Colonic mucosa (tissue), 4 donors: ENCODE measurements at regions of chr7 and their contacts with region 1.

Region 1: GRCh38 chr7:51366930-51367613 is 50.5 kb upstream of the COBL start:
- DNase-seq: peak; percentile 45
- H3K4me3 ChIP-seq: no peak overlapping the region
- H3K27ac ChIP-seq: no peak overlapping the region
- H3K4me1 ChIP-seq: no peaks in the 10 kb centered on the region
- H3K27me3 ChIP-seq: no peaks in the 10 kb centered on the region
- CTCF ChIP-seq: peak; percentile 73

Region 2: GRCh38 chr7:51162724-51163329 is 204.2 kb before region 1 on chr7:
- intact Hi-C with region 1: loop called (anchors 2 kb)
- DNase-seq: peak; percentile 88
- H3K4me3 ChIP-seq: no peak overlapping the region
- H3K27ac ChIP-seq: no peak overlapping the region
- H3K4me1 ChIP-seq: no peaks in the 10 kb centered on the region
- H3K27me3 ChIP-seq: no peaks in the 10 kb centered on the region
- CTCF ChIP-seq: peak; percentile 74